Astrocyte of the cerebellum (primary cell): ENCODE measurements at regions of chr2 and their contacts with region 1.

Region 1: GRCh38 chr2:198991431-198991830 is 466.3 kb downstream of the SATB2 start:
- DNase-seq: no peak
- H3K4me3 ChIP-seq: no peak overlapping the region
- CTCF ChIP-seq: no peak

Region 2: DNA sequence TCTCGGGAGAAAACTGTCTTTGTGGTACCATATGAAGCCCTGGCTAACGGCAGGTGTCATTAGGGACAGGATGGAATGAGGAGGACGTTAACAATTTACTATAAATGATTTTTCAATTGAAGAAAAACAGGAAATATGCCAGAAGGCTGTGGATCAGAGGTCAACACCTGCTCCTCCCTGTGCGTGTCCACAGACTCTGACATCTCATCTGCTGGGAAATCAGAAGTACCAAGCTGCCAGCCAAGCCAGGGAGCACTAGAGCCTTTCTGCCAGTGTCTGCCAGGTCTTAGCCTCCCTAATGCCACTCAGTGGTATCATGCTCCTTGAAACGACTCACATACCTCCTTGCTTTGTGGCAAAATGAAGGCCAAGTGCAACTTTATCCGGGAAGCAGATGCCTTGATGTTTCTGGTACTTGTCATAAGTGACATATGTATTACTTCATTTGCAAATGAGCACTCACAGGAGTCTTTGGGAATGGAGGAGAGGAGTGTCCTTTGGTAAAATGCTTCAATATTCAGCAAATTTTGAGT is 74.8 kb before region 1 on chr2:
- in situ Hi-C with region 1: loop called (anchors 5 kb)
- DNase-seq: no peak
- H3K4me3 ChIP-seq: no peak overlapping the region
- CTCF ChIP-seq: no peak